ENCODE measurements at regions of chr1 and their contacts with region 1.

Region 1: GRCh38 chr1:91165033-91165654 is 143.3 kb upstream of the ZNF644 start:
- H3K4me3 ChIP-seq: no peak overlapping the region
- H3K27ac ChIP-seq: no peak overlapping the region
- H3K4me1 ChIP-seq: no peaks in the 10 kb centered on the region
- CTCF ChIP-seq: peak; percentile 76

Region 2: GRCh38 chr1:90721210-90722194 is 443.6 kb before region 1 on chr1:
- CTCF ChIA-PET with region 1: interaction called, 24 read pairs
- POLR2A ChIA-PET with region 1: no interaction called
- H3K4me3 ChIP-seq: no peak overlapping the region; the same call in 1 of the 2 replicates
- H3K27ac ChIP-seq: no peak overlapping the region
- H3K4me1 ChIP-seq: peaks cover 1% of the 10 kb centered on the region; the same call in 1 of the 2 replicates
- CTCF ChIP-seq: 0 out of 2 replicates have a peak, but pooled peaks have one; percentile 46

Region 3: DNA sequence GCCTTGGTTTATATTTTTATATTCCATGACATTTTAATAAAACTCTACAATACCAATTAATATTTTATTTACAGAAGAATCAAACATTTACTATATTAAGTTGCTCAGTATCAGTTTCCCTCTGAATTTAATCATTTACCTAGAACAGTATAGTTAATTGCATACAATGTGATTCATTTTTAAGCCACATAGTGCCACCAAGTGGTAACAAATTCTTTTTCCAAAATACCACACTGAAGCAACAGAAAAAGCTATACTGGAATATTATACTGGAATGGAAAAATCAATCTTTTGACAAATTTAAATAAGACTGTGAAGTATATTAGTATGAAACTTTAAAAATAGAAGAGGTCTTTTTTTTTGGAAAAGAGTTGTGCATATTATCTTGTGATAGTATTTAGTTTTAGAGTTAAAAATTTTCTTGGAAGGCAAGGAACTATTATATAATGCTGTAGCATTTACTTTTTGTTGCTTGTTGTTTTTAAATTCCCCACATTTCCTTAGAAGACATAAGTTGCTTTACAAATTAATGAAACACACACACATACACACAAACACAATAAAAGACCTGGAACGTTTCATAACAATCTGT is 200.6 kb before region 1 on chr1:
- CTCF ChIA-PET with region 1: interaction called, 11 read pairs
- POLR2A ChIA-PET with region 1: no interaction called
- H3K4me3 ChIP-seq: no peak overlapping the region
- H3K27ac ChIP-seq: no peak overlapping the region
- H3K4me1 ChIP-seq: no peaks in the 10 kb centered on the region
- CTCF ChIP-seq: no peak

Region 4: GRCh38 chr1:91021686-91022517 is 143.2 kb before region 1 on chr1 and contains the start of gene ZNF644:
- CTCF ChIA-PET with region 1: interaction called, 12 read pairs
- POLR2A ChIA-PET with region 1: interaction called, 4 read pairs
- H3K4me3 ChIP-seq: peak within 1 kb of the TSS; percentile 97
- H3K27ac ChIP-seq: peak within 1 kb of the TSS; percentile 100
- H3K4me1 ChIP-seq: no peaks in the 10 kb centered on the region
- CTCF ChIP-seq: no peak

Region 5: DNA sequence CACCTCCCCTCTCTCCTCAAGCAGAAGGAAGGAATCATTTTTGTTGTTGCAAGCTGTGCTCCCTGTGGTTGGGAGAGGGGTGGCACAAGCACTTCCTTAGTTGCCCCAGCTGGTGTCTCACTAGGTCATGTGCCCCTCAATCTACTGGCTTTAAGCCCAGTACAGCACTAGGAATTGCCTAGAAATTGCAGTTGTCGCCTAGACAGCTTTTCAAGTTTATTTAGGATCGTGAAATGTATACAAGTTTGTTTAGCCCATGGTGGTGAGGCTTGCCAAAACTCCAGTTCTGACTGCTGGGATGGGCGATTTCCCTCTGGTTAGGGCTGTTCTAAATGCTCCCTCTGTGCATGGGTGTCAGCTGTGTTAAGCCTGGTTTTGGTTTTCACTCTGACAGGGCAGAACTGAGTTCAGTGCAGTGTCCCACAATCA is 16.5 kb before region 1 on chr1:
- CTCF ChIA-PET with region 1: interaction called, 15 read pairs
- POLR2A ChIA-PET with region 1: no interaction called
- H3K4me3 ChIP-seq: no peak overlapping the region
- H3K27ac ChIP-seq: no peak overlapping the region
- H3K4me1 ChIP-seq: no peaks in the 10 kb centered on the region
- CTCF ChIP-seq: no peak

Region 6: DNA sequence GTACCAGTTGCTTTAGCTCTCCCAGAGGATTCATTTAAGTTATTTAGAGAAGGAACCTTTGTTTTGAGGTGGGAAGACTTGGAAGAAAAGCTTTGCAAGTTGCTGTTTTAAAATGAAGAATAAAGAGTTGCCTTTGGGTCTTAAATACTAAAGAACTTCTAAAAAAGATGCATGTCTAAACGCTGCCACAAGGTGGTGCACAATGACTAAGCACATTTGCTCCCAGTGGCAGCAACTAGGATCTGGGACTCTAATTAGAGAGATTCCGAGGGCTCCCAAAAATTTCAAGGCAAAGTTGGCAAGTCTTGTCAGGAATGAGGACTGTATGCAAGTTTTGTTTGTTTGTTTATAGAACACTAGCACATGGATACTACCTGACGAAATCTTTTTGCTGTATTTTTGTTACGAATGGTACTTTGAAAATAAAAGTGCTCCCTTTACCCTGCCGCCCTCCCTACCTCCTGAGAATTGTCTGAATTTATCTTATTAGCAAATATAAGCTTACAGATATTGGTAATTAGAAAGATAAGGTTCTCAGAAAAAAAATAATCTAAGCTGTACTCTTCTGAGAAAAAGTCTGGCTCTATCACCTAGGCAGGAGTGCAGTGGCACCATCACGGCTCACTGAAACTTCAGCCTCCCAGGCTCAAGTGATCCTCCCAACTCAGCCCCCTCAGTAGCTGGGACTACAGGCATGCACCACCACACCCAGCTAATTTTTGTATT is 117.7 kb after region 1 on chr1:
- CTCF ChIA-PET with region 1: interaction called, 187 read pairs
- POLR2A ChIA-PET with region 1: no interaction called
- H3K4me3 ChIP-seq: no peak overlapping the region
- H3K27ac ChIP-seq: no peak overlapping the region
- H3K4me1 ChIP-seq: no peaks in the 10 kb centered on the region; the same call in 1 of the 2 replicates
- CTCF ChIP-seq: peak; percentile 64